Activated B cell treated with CpG ODN at 0.5 μM for 24 hours (primary cell): ENCODE measurements at regions of chr6 and their contacts with region 1.

Region 1: GRCh38 chr6:106163446-106163965 is 77.4 kb downstream of the PRDM1 start:
- DNase-seq: peak; percentile 37
- ATAC-seq: peak; percentile 57
- H3K4me3 Mint-ChIP-seq: peak overlapping the region; percentile 36
- H3K27ac Mint-ChIP-seq: peak overlapping the region; percentile 92
- H3K4me1 Mint-ChIP-seq: peaks cover 35% of the 10 kb centered on the region
- H3K27me3 Mint-ChIP-seq: no peaks in the 10 kb centered on the region
- CTCF ChIP-seq: no peak

Region 2: GRCh38 chr6:106077170-106077569 is 86.3 kb before region 1 on chr6:
- CTCF ChIA-PET with region 1: no interaction called
- POLR2A ChIA-PET with region 1: no interaction called
- intact Hi-C with region 1: no loop called
- DNase-seq: no peak
- ATAC-seq: no peak
- H3K4me3 Mint-ChIP-seq: no peak overlapping the region
- H3K27ac Mint-ChIP-seq: no peak overlapping the region
- H3K4me1 Mint-ChIP-seq: peaks cover 5% of the 10 kb centered on the region
- H3K27me3 Mint-ChIP-seq: peaks cover 14% of the 10 kb centered on the region
- CTCF ChIP-seq: no peak

Region 3: GRCh38 chr6:106114492-106115265 is 48.8 kb before region 1 on chr6:
- CTCF ChIA-PET with region 1: interaction called, 4 read pairs
- POLR2A ChIA-PET with region 1: interaction called, 5 read pairs
- intact Hi-C with region 1: loop called (anchors 5 kb)
- DNase-seq: no peak
- ATAC-seq: peak; percentile 57
- H3K4me3 Mint-ChIP-seq: peak overlapping the region; percentile 25
- H3K27ac Mint-ChIP-seq: peak overlapping the region; percentile 5
- H3K4me1 Mint-ChIP-seq: peaks cover 42% of the 10 kb centered on the region
- H3K27me3 Mint-ChIP-seq: no peaks in the 10 kb centered on the region
- CTCF ChIP-seq: no peak

Region 4: DNA sequence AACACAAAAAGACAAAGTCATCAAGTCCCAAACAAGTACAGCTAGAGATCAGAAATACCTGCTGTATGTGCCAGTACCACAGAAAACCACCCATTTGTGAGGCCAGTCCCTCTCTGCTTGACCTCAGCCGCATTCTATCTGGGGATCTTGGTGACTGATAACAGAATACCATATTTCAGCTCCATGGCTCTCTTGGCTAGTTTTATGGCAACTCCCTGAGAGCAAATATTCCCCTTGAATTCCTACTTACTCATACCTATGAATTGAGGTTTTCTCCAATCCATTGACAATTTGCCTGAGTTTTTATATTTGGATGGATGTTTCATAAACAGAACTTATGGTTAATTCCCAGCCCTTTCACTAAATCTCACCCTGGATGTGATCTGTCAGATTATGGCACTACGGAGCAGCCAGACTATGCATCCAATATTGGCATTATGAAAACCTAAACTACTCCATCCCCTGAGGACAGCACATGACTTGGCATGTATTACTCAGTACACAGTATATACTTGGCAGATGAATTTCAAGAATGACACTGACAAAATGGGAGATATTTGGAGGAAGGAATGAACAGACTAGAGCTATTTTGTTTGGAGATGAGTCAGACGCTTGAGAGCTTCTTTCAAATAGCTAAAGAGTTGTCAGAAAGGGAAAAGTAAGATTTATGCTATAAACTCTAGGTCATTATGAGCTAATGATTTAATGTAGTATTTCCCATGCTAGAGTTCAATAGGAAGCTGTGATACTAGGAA is 18.3 kb after region 1 on chr6:
- CTCF ChIA-PET with region 1: interaction called, 4 read pairs
- POLR2A ChIA-PET with region 1: interaction called, 37 read pairs
- intact Hi-C with region 1: loop called (anchors 1 kb)
- DNase-seq: no peak
- ATAC-seq: peak; percentile 41
- H3K4me3 Mint-ChIP-seq: no peak overlapping the region
- H3K27ac Mint-ChIP-seq: peak overlapping the region; percentile 78
- H3K4me1 Mint-ChIP-seq: peaks cover 30% of the 10 kb centered on the region
- H3K27me3 Mint-ChIP-seq: no peaks in the 10 kb centered on the region
- CTCF ChIP-seq: no peak

Region 5: GRCh38 chr6:106519460-106520394 is 356.2 kb after region 1 on chr6:
- CTCF ChIA-PET with region 1: no interaction called
- POLR2A ChIA-PET with region 1: no interaction called
- intact Hi-C with region 1: loop called (anchors 5 kb)
- DNase-seq: peak; percentile 43
- ATAC-seq: peak; percentile 68
- H3K4me3 Mint-ChIP-seq: peak overlapping the region; percentile 86
- H3K27ac Mint-ChIP-seq: peak overlapping the region; percentile 97
- H3K4me1 Mint-ChIP-seq: peaks cover 85% of the 10 kb centered on the region
- H3K27me3 Mint-ChIP-seq: no peaks in the 10 kb centered on the region
- CTCF ChIP-seq: no peak